B cell (primary cell): ENCODE measurements at regions of chr6 and their contacts with region 1.

Region 1: GRCh38 chr6:75526502-75527127 is 33.0 kb upstream of the FILIP1 start:
- DNase-seq: peak; percentile 60
- ATAC-seq: no peak
- H3K4me3 ChIP-seq: no peak overlapping the region
- H3K4me3 Mint-ChIP-seq: no peak overlapping the region
- H3K27ac ChIP-seq: no peak overlapping the region
- H3K27ac Mint-ChIP-seq: no peak overlapping the region
- H3K4me1 ChIP-seq: no peaks in the 10 kb centered on the region
- H3K4me1 Mint-ChIP-seq: no peaks in the 10 kb centered on the region
- H3K27me3 ChIP-seq: peaks cover 0 to 8% (median 1%) of the 10 kb centered on the region in 4 experiments
- H3K27me3 Mint-ChIP-seq: peaks cover 39% of the 10 kb centered on the region
- CTCF ChIP-seq: peak; percentile 73

Region 2: GRCh38 chr6:73739096-73739495 is 1787.5 kb before region 1 on chr6:
- CTCF ChIA-PET with region 1: no interaction called
- POLR2A ChIA-PET with region 1: no interaction called
- intact Hi-C with region 1: loop called (anchors 5 kb)
- DNase-seq: peak; percentile 74
- ATAC-seq: peak; percentile 51
- H3K4me3 ChIP-seq: no peak overlapping the region
- H3K4me3 Mint-ChIP-seq: no peak overlapping the region
- H3K27ac ChIP-seq: no peak overlapping the region
- H3K27ac Mint-ChIP-seq: no peak overlapping the region
- H3K4me1 ChIP-seq: no peaks in the 10 kb centered on the region
- H3K4me1 Mint-ChIP-seq: no peaks in the 10 kb centered on the region
- H3K27me3 ChIP-seq: no peaks in the 10 kb centered on the region
- H3K27me3 Mint-ChIP-seq: peaks cover 4% of the 10 kb centered on the region
- CTCF ChIP-seq: peak; percentile 90

Region 3: DNA sequence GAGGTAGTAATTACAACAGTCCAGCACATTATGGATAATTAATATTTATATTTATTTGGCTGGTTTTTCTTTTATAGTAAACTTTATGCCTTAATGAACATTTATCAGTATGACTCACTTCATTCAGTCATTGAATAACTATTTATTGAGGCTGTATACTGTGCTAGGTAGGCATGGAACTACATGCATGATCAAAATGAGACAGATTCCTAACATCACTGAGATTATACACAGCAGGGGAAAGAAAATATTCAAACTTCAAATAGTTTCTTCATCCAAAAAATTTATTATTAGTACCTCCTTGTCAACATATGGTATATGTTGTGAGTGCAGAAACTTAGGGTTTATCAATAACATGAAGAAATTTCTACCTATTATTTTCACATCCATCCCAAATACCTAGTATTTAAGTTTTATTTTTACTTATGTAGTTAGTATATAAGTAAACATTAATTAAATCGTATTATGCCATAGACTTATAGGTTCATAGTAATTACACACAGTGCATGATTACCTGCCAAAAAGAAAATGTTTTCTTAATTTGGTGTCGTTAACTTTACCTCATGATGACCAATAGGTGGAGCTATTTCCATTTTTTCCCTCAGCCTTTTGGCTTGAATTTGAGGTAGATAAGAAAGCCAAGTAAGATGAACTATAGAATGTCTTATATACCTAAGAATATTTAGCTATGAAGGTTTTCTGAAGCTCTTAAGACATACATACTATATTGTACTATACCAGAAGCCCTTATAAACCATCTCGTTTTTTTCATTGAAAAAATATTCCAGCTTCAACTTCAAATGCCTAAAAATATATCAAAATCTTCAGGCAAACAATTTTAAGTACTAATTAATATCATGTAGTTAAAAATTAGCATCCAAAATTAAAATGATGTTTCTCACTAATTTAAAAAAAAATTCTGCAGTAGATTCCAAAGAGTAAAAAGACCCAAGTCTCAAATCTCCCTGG is 229.5 kb before region 1 on chr6:
- CTCF ChIA-PET with region 1: interaction called, 4 read pairs
- POLR2A ChIA-PET with region 1: no interaction called
- intact Hi-C with region 1: loop called (anchors 2 kb)
- DNase-seq: peak; percentile 68
- ATAC-seq: peak; percentile 36
- H3K4me3 ChIP-seq: no peak overlapping the region
- H3K4me3 Mint-ChIP-seq: no peak overlapping the region
- H3K27ac ChIP-seq: no peak overlapping the region
- H3K27ac Mint-ChIP-seq: no peak overlapping the region
- H3K4me1 ChIP-seq: no peaks in the 10 kb centered on the region
- H3K4me1 Mint-ChIP-seq: no peaks in the 10 kb centered on the region
- H3K27me3 ChIP-seq: no peaks in the 10 kb centered on the region
- H3K27me3 Mint-ChIP-seq: no peaks in the 10 kb centered on the region
- CTCF ChIP-seq: peak; percentile 90

Region 4: GRCh38 chr6:75579951-75580350 is 53.3 kb after region 1 on chr6:
- CTCF ChIA-PET with region 1: no interaction called
- POLR2A ChIA-PET with region 1: no interaction called
- intact Hi-C with region 1: no loop called
- DNase-seq: no peak
- ATAC-seq: no peak
- H3K4me3 ChIP-seq: no peak overlapping the region
- H3K4me3 Mint-ChIP-seq: peak overlapping the region; percentile 3
- H3K27ac ChIP-seq: no peak overlapping the region
- H3K27ac Mint-ChIP-seq: no peak overlapping the region
- H3K4me1 ChIP-seq: peaks cover 0 to 5% of the 10 kb centered on the region in 2 donors
- H3K4me1 Mint-ChIP-seq: peaks cover 14% of the 10 kb centered on the region
- H3K27me3 ChIP-seq: peaks cover 0 to 4% (median 0%) of the 10 kb centered on the region in 4 experiments
- H3K27me3 Mint-ChIP-seq: peaks cover 28% of the 10 kb centered on the region
- CTCF ChIP-seq: no peak

Region 5: GRCh38 chr6:75818098-75818855 is 291.7 kb after region 1 on chr6:
- CTCF ChIA-PET with region 1: no interaction called
- POLR2A ChIA-PET with region 1: no interaction called
- intact Hi-C with region 1: no loop called
- DNase-seq: no peak
- ATAC-seq: no peak
- H3K4me3 ChIP-seq: no peak overlapping the region
- H3K4me3 Mint-ChIP-seq: no peak overlapping the region
- H3K27ac ChIP-seq: no peak overlapping the region
- H3K27ac Mint-ChIP-seq: no peak overlapping the region
- H3K4me1 ChIP-seq: no peaks in the 10 kb centered on the region
- H3K4me1 Mint-ChIP-seq: no peaks in the 10 kb centered on the region
- H3K27me3 ChIP-seq: no peaks in the 10 kb centered on the region
- H3K27me3 Mint-ChIP-seq: peaks cover 14% of the 10 kb centered on the region
- CTCF ChIP-seq: no peak